ENCODE measurements at regions of chr17 and their contacts with region 1.

Region 1: DNA sequence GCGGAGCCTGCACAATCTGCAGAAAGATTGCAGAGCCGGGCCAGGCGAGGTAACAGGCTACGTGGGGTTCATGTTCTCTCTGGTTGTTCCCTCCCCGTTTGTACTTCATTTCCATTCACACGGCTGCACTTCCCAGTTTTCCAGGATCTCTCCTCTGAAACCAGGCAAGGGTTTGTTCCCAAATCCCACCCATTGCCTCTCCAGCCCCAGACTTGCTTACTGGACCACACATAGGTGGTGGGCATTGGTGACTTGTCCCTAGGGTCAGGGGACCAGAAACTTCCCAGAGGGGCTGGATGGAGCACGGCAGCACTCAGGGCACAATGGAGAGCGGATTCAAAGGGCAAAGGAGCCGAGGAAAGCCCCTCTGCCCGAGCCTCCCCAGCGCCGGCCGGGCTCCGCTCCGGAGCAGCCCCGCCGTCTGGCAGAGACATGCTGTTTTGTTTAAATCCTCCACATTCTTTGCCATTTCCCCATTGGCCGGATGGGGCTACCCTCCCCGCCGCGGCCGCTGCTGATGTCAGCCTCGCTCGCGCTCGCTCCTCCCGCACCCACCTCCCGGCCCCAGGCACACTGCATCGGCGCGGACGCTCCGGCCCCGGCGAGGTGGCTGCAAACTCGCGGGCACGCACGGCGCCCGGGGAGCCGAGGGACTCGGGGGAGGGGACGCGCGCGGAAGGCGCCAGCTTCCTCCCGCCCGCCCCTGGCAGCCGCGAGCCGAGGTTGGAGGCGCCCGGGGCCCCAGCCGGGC is at the start of gene PITPNC1:
- DNase-seq: peak; percentile 86
- CTCF ChIP-seq: no peak

Region 2: GRCh38 chr17:67441052-67441927 is 64.4 kb after region 1 on chr17:
- CTCF ChIA-PET with region 1: interaction called, 12 read pairs
- POLR2A ChIA-PET with region 1: no interaction called
- DNase-seq: peak; percentile 31
- CTCF ChIP-seq: no peak

Region 3: GRCh38 chr17:67481808-67482207 is 104.9 kb after region 1 on chr17:
- CTCF ChIA-PET with region 1: interaction called, 70 read pairs
- POLR2A ChIA-PET with region 1: no interaction called
- DNase-seq: no peak
- CTCF ChIP-seq: no peak

Region 4: GRCh38 chr17:67575325-67575724 is 198.4 kb after region 1 on chr17:
- CTCF ChIA-PET with region 1: interaction called, 10 read pairs
- POLR2A ChIA-PET with region 1: no interaction called
- DNase-seq: peak; percentile 51
- CTCF ChIP-seq: peak; percentile 54

Region 5: DNA sequence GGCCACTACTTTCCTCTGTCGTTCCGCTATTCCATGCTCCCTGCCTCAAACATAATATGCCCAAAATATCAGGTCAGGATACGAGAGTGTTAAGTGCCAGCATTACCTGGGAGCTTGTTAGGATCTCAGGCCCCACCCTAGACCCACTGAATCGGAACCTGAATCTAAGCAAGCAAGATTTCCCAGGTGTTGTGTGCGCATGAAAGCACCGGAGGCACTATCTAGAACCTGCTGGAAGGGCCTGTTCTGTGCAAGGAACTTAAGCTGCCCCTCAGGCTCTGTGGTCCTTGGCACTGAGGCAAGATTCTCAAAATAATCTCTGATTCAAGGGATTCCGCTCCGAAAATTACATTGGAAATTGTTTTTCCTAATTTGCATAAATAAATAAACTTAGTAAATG is 233.1 kb after region 1 on chr17:
- CTCF ChIA-PET with region 1: interaction called, 72 read pairs
- POLR2A ChIA-PET with region 1: no interaction called
- DNase-seq: no peak
- CTCF ChIP-seq: no peak

Region 6: DNA sequence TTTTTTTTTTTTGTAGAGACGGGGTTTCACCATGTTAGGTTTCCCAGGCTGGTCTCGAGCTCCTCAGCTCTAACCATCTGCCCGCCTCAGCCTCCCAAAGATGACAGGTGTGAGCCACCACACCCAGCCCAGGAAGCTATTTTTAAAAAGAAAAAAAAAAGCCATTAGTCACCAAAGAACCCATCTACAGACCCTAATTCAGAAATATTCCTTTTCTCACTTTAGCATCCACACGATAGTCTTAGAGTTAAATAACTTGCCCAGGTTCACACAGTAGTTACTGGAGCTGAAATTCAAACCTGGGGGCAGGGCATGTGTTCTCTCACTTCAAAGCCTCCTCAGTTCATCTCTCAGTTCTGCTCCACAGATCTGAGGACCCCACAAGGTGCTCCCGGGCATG is 270.6 kb after region 1 on chr17:
- CTCF ChIA-PET with region 1: interaction called, 58 read pairs
- POLR2A ChIA-PET with region 1: no interaction called
- DNase-seq: no peak
- CTCF ChIP-seq: no peak